ENCODE measurements at regions of chr22 and their contacts with region 1.

Region 1: DNA sequence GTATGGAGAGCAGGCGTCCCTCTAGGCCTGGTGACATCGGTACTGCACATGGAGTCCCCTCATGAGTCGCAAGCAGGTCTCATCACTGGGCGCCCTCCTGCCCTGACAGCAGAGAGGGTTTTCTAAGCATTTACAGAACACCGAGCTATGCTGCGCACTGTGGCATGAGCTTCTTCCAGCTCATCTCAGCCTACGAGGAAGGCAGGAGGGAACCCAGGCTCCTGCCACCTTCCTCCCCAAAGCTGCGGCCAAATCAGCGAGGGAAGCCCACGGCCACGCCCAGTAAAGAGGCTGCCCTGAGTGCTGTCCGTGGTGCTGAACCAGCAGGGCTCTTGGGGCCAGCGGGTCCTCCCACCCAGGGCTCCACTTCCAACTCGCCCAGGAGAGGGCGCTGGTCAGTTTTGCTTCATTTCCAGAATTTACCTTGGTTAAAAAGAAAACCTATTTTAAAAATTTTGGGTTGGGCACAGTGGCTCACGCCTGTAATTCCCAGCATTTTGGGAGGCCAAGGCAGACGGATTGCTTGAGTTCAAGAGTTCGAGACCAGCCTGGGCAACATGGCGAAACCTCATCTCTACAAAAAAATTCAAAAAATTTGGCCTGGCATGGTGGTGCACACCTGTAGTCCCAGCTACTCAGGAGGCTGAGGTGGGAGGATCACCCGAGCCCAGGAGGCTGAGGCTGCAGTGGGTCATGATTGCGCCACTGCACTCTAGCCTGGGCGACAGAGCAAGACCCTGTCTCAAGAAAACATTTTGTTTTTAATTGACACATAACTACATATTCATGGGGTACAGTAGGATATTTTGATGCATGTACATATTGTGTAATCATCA is 34.2 kb downstream of the PHF21B start:
- DNase-seq: peak; percentile 71
- ATAC-seq: peak; percentile 99
- H3K4me3 ChIP-seq: no peak overlapping the region
- H3K27ac ChIP-seq: no peak overlapping the region
- H3K4me1 ChIP-seq: no peaks in the 10 kb centered on the region
- H3K27me3 ChIP-seq: peaks cover 49% of the 10 kb centered on the region
- CTCF ChIP-seq: peak; percentile 85 to 91 (median 86)
- POLR2A ChIP-seq: no peak
- RAD21 ChIP-seq: peak; percentile 89

Region 2: GRCh38 chr22:45082795-45083194 is 107.2 kb after region 1 on chr22:
- CTCF ChIA-PET with region 1: interaction called, 4 read pairs
- POLR2A ChIA-PET with region 1: no interaction called
- RAD21 ChIA-PET with region 1: no interaction called
- intact Hi-C with region 1: loop called (anchors 1 kb)
- DNase-seq: no peak
- ATAC-seq: peak; percentile 61
- H3K4me3 ChIP-seq: no peak overlapping the region
- H3K27ac ChIP-seq: no peak overlapping the region
- H3K4me1 ChIP-seq: peaks cover 0 to 4% of the 10 kb centered on the region in 2 experiments; a peak in 1 of 4 replicates
- H3K27me3 ChIP-seq: no peaks in the 10 kb centered on the region; the same call in 1 of the 2 replicates
- CTCF ChIP-seq: peak; percentile 25 to 50 (median 33); a peak in 4 of 6 replicates
- POLR2A ChIP-seq: no peak
- RAD21 ChIP-seq: peak; percentile 62

Region 3: GRCh38 chr22:45096256-45096907 is 120.7 kb after region 1 on chr22:
- CTCF ChIA-PET with region 1: interaction called, 5 read pairs
- POLR2A ChIA-PET with region 1: no interaction called
- RAD21 ChIA-PET with region 1: no interaction called
- intact Hi-C with region 1: loop called (anchors 1 kb)
- DNase-seq: peak; percentile 47
- ATAC-seq: peak; percentile 96
- H3K4me3 ChIP-seq: no peak overlapping the region
- H3K27ac ChIP-seq: no peak overlapping the region
- H3K4me1 ChIP-seq: no peaks in the 10 kb centered on the region
- H3K27me3 ChIP-seq: no peaks in the 10 kb centered on the region
- CTCF ChIP-seq: peak; percentile 85 to 95 (median 93)
- POLR2A ChIP-seq: no peak
- RAD21 ChIP-seq: peak; percentile 84